Common myeloid progenitor, CD34-positive (primary cell): ENCODE measurements at regions of chr22 and their contacts with region 1.

Region 1: GRCh38 chr22:39446295-39446721 is 10.5 kb upstream of the MGAT3 start:
- DNase-seq: peak in 2 of 3 donors; percentile 27 to 39
- H3K4me3 ChIP-seq: peak overlapping the region in 1 of 7 experiments; percentile 8
- H3K27ac ChIP-seq: peak overlapping the region in 1 of 2 experiments; percentile 46
- H3K4me1 ChIP-seq: peaks cover 0 to 76% (median 42%) of the 10 kb centered on the region in 4 experiments
- H3K27me3 ChIP-seq: no peaks in the 10 kb centered on the region

Region 2: GRCh38 chr22:39462443-39463221 is 16.3 kb after region 1 on chr22:
- CTCF ChIA-PET with region 1: interaction called, 11 read pairs
- POLR2A ChIA-PET with region 1: no interaction called
- DNase-seq: peak; percentile 72 to 90 (median 89)
- H3K4me3 ChIP-seq: peak overlapping the region in 1 of 7 experiments; percentile 33
- H3K27ac ChIP-seq: peak overlapping the region; percentile 84 to 88
- H3K4me1 ChIP-seq: peaks cover 0 to 75% (median 37%) of the 10 kb centered on the region in 4 experiments
- H3K27me3 ChIP-seq: peaks cover 0 to 16% (median 8%) of the 10 kb centered on the region in 5 experiments